HepG2 (cell line): ENCODE measurements at regions of chr20 and their contacts with region 1.

Region 1: GRCh38 chr20:54416770-54417169 is 58.6 kb upstream of the DOK5 start:
- DNase-seq: no peak
- ATAC-seq: no peak
- H3K4me3 ChIP-seq: no peak overlapping the region
- H3K27ac ChIP-seq: no peak overlapping the region
- H3K4me1 ChIP-seq: no peaks in the 10 kb centered on the region
- H3K27me3 ChIP-seq: no peaks in the 10 kb centered on the region
- CTCF ChIP-seq: no peak
- EP300 ChIP-seq: no peak
- POLR2A ChIP-seq: no peak
- RAD21 ChIP-seq: no peak

Region 2: GRCh38 chr20:54355641-54356280 is 61.0 kb before region 1 on chr20:
- CTCF ChIA-PET with region 1: no interaction called
- POLR2A ChIA-PET with region 1: no interaction called
- in situ Hi-C with region 1: no loop called
- intact Hi-C with region 1: loop called (anchors 10 kb)
- DNase-seq: no peak
- ATAC-seq: no peak
- H3K4me3 ChIP-seq: no peak overlapping the region
- H3K27ac ChIP-seq: no peak overlapping the region
- H3K4me1 ChIP-seq: no peaks in the 10 kb centered on the region
- H3K27me3 ChIP-seq: peaks cover 0 to 4% of the 10 kb centered on the region in 2 experiments; a peak in 2 of 5 replicates
- CTCF ChIP-seq: no peak
- EP300 ChIP-seq: no peak
- POLR2A ChIP-seq: no peak
- RAD21 ChIP-seq: no peak